Dendritic cell treated with granulocyte-macrophage colony-stimulating factor and Interleukin-4, amounts not matched to agents 40 ng/mL and 50 ng/mL, for 4 days (primary cell): ENCODE measurements at regions of chr9 and their contacts with region 1.

Region 1: DNA sequence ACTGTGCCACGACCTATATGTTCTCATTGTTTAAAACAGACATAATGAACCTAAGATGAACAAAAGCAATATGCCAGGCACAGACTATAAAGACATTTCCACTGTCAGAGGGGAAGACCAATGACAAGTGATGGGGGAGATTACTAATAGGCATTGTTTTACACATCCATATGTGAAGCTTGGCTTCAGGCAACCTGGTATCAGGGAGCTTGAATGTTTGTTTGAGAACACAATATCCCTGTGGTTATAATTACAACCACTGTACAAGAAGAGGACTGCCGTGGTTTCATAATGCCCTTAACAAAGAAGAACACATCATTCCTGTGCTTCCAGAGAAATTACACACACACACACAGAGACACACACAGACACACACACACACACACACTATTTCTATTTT is 385.7 kb downstream of the BNC2 start:
- H3K4me3 Mint-ChIP-seq: no peak overlapping the region
- H3K27ac Mint-ChIP-seq: no peak overlapping the region
- H3K4me1 Mint-ChIP-seq: no peaks in the 10 kb centered on the region
- H3K27me3 Mint-ChIP-seq: no peaks in the 10 kb centered on the region

Region 2: GRCh38 chr9:16429671-16430070 is 55.1 kb before region 1 on chr9:
- intact Hi-C with region 1: loop called (anchors 2 kb)
- H3K4me3 Mint-ChIP-seq: no peak overlapping the region
- H3K27ac Mint-ChIP-seq: no peak overlapping the region
- H3K4me1 Mint-ChIP-seq: no peaks in the 10 kb centered on the region
- H3K27me3 Mint-ChIP-seq: peaks cover 2% of the 10 kb centered on the region